AG04450 (cell line): ENCODE measurements at regions of chr1 and their contacts with region 1.

Region 1: DNA sequence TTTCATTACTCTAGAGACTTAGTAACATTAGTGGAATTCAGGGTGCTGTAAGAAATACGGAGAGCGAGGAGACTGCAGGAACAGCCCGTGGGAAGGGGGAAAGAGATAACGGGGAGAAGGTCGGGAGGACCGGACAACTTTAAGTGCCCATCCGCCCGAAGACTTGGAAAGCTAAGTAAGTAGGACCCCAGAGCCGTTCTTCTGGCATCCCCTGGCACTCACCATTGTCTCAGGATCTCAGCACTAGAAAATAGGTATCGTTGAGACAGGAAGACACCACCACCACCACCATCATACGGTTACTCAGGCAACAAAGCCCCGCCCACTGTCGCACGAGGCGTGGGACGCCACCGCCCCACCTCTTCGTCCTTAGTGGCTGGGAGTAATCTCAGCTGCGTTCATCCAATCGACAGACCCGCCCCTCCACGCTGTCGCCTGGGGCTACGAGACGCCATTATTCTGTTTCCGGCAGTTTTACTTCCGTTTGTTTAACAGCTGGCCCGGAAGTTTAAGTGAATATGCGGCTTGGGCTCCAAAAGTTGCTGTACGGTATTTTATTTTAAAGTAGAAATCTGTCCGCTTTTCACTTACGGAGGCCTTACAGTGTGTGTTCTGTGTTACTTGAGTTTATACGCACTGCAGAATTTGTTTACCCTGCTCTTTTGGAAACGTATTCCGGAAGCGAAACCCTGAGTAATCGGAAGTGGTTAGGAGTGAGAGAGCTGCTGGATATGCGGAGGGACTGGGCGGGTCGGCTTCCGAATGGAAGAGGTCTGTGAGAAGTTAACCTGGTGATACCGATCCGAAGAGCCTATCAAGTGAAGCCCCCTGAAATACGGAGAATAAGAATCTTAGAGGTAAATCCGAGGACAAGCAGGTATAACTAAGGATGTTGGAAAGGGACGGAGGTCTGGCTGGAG is at the starts of genes BLZF1 and NME7:
- DNase-seq: peak; percentile 88
- H3K4me3 ChIP-seq: peak within 1 kb of the TSS; percentile 88
- H3K27ac ChIP-seq: peak within 1 kb of the TSS; percentile 80
- H3K27me3 ChIP-seq: no peaks in the 10 kb centered on the region
- CTCF ChIP-seq: no peak
- polyA plus RNA-seq, gene BLZF1: 16.2 and 23.0 TPM in 2 replicates
- polyA plus RNA-seq, gene NME7: 19.7 and 27.3 TPM in 2 replicates

Region 2: GRCh38 chr1:168603501-168604110 is 764.1 kb before region 1 on chr1:
- CTCF ChIA-PET with region 1: interaction called, 15 read pairs
- POLR2A ChIA-PET with region 1: no interaction called
- DNase-seq: no peak
- H3K4me3 ChIP-seq: no peak overlapping the region
- H3K27ac ChIP-seq: no peak overlapping the region
- H3K27me3 ChIP-seq: no peaks in the 10 kb centered on the region
- CTCF ChIP-seq: peak; percentile 73